ENCODE measurements at regions of chr7 and their contacts with region 1.

Region 1: GRCh38 chr7:129091484-129092002 is 36.6 kb upstream of the TNPO3 start:
- DNase-seq: peak; percentile 91
- H3K4me3 ChIP-seq: peak overlapping the region in 1 of 2 experiments; percentile 14; a peak in 1 of 4 replicates
- H3K27ac ChIP-seq: no peak overlapping the region
- H3K4me1 ChIP-seq: no peaks in the 10 kb centered on the region; a peak in 1 of 4 replicates
- H3K27me3 ChIP-seq: no peaks in the 10 kb centered on the region; the same call in 1 of the 2 replicates
- CTCF ChIP-seq: peak; percentile 100
- EP300 ChIP-seq: no peak
- RAD21 ChIP-seq: peak; percentile 100

Region 2: DNA sequence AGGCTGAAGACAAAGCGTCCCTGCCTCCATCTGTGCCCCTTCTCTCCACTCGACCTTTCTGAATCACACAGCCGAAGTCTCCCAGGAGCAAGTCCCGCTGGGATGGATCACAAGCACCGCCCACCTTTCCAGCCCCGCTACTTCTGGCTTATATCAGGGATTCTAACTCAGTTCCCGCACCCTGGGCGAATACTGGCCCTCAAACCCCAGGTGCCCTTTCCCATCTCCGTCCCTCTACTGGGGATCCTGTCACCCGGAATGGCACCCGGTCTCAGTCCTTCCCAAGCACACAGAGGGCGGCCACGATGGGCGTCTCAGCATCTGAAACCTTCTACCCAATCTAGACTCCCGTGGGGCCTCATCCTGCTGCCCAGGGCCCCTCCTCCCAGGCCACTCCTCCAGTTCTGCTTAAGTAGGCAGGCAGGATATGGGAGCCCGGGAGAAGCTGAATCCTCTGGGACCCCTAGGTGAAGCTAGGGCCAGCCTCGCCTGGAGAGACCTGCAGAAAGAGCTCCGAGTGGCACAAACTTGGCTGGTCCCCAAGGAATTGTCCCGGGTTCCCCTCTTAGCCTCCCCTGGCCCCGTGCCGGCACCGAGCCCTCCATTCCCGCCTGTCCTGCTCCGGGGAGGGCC is 181.8 kb before region 1 on chr7:
- CTCF ChIA-PET with region 1: interaction called, 137 read pairs
- POLR2A ChIA-PET with region 1: no interaction called
- DNase-seq: peak; percentile 70
- H3K4me3 ChIP-seq: no peak overlapping the region
- H3K27ac ChIP-seq: no peak overlapping the region
- H3K4me1 ChIP-seq: peaks cover 0 to 4% of the 10 kb centered on the region in 2 experiments; a peak in 1 of 4 replicates
- H3K27me3 ChIP-seq: peaks cover 12% of the 10 kb centered on the region; the same call in 1 of the 2 replicates
- CTCF ChIP-seq: no peak
- EP300 ChIP-seq: no peak
- RAD21 ChIP-seq: no peak

Region 3: GRCh38 chr7:128954830-128955802 is 136.4 kb before region 1 on chr7:
- CTCF ChIA-PET with region 1: interaction called, 32 read pairs
- POLR2A ChIA-PET with region 1: no interaction called
- DNase-seq: peak; percentile 86
- H3K4me3 ChIP-seq: no peak overlapping the region
- H3K27ac ChIP-seq: peak overlapping the region; percentile 35 to 93
- H3K4me1 ChIP-seq: peaks cover 5 to 52% of the 10 kb centered on the region in 2 experiments; a peak in 3 of 4 replicates
- H3K27me3 ChIP-seq: no peaks in the 10 kb centered on the region
- CTCF ChIP-seq: no peak; the same call in 1 of the 2 replicates
- EP300 ChIP-seq: peak in 1 of 2 experiments; percentile 89; a peak in 2 of 4 replicates
- RAD21 ChIP-seq: peak; percentile 63

Region 4: GRCh38 chr7:129030440-129030839 is 61.1 kb before region 1 on chr7:
- CTCF ChIA-PET with region 1: interaction called, 11 read pairs
- POLR2A ChIA-PET with region 1: no interaction called
- DNase-seq: no peak
- H3K4me3 ChIP-seq: no peak overlapping the region
- H3K27ac ChIP-seq: no peak overlapping the region
- H3K4me1 ChIP-seq: no peaks in the 10 kb centered on the region; a peak in 1 of 4 replicates
- H3K27me3 ChIP-seq: no peaks in the 10 kb centered on the region
- CTCF ChIP-seq: no peak
- EP300 ChIP-seq: no peak
- RAD21 ChIP-seq: no peak

Region 5: DNA sequence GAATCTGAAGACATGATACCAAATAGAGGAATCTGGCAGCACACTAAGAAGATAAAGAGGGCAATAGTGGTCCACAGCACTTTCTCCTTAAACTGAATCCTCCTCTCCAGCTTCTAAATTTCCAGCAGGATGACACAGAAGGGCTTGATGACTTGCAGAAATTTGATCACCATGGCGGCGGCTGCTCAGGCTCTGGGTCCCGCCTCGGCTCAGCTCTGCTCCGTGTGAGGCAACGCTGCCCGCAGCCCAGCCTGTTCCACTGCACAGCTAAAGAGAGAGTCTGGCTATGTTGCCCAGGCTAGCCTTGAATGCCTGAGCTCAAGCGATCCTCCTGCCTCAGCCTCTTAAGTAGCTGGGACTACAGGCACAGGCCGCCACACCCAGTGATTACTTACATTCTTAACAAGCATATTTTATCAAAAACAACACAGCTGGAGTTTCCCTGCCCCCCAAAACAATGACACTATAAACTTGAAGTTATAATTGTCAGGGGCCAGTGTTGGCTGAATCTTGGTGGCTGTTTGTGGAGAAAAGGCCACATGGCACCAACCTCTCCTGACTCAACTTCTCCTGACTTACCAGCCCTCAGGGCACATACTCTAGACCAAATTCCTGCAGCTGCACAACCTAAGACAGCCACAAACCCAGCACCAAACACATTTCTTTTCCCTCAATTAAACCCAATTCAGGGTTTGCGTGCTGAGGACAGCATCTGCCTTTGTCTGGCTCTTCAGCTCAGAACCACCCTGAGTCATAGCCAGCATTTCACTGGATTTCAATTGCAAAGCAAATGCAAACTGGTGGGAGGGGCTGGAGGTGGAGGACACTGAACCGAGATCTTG is 25.0 kb before region 1 on chr7:
- CTCF ChIA-PET with region 1: interaction called, 19 read pairs
- POLR2A ChIA-PET with region 1: no interaction called
- DNase-seq: no peak
- H3K4me3 ChIP-seq: no peak overlapping the region
- H3K27ac ChIP-seq: no peak overlapping the region
- H3K4me1 ChIP-seq: no peaks in the 10 kb centered on the region
- H3K27me3 ChIP-seq: peaks cover 19% of the 10 kb centered on the region; the same call in 1 of the 2 replicates
- CTCF ChIP-seq: no peak
- EP300 ChIP-seq: no peak
- RAD21 ChIP-seq: no peak

Region 6: DNA sequence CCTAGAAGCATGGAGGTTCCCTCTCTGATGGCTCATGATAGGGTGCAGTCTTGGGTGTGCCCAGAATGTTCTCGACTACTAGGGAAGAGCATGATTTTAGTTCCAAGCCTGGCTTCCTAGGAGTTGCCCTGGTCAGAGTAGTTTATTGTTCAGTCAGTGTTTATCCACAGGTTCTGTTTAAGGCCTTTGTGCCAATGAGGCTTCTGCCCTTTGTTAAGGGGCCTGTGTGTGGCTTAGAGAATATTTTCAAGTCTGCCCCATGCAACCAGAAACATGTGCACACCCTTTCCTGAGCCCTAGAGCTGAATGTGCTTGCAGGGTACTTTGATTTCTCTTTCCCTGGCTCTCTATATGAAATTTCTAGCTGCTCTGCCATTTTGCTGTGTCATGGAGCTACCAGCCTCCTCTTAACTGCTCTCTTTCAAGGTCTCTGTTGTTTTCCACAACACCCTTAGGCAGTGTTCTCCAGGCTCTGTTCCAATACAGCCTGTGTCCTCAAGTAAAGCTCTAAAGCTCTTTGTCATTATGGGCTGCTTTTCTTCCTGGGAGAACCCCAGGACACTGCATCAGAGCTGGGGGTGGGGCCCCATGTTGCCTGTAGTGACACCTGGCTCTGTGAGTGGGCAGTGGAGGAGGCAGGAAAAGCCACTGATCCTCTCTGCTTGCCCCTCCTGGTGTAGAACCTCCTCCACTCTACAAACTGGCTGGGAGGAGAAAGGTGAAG is 18.9 kb after region 1 on chr7:
- CTCF ChIA-PET with region 1: interaction called, 33 read pairs
- POLR2A ChIA-PET with region 1: no interaction called
- DNase-seq: peak; percentile 32
- H3K4me3 ChIP-seq: no peak overlapping the region
- H3K27ac ChIP-seq: no peak overlapping the region
- H3K4me1 ChIP-seq: peaks cover 0 to 7% of the 10 kb centered on the region in 2 experiments; a peak in 1 of 4 replicates
- H3K27me3 ChIP-seq: peaks cover 12% of the 10 kb centered on the region; the same call in 1 of the 2 replicates
- CTCF ChIP-seq: no peak
- EP300 ChIP-seq: no peak
- RAD21 ChIP-seq: no peak

Region 7: DNA sequence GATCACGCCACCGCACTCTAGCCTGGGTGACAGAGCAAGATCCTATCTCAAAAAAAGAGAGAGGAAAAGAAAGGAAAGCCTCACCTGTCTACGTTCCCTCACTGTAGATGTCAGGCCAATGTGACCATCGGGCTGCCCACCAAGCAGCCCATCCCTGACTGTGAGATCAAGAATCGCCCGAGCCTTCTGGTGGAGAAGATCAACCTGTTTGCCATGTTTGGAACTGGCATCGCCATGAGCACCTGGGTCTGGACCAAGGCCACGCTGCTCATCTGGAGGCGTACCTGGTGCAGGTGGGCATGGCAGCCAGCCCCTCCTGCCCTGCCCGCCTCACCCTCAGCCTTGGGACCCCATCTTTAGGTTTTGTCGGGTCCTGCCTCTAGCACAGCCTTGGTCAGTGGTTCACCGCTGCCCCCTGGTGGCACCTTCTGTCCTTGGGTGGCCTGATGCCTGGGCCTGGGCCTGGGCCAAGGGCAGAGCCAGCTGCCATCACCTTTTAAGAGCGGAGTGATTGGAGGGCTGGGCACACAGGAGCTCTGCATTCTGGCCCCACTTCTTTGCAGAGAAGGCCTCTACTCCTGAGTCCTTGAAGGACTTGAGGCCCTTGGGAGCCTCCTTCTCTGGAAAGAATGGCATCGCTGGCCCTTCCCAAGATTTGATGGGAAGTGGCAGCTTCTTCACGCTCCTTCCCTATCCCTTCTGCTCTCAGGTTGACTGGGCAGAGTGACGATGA is 118.9 kb after region 1 on chr7:
- CTCF ChIA-PET with region 1: interaction called, 20 read pairs
- POLR2A ChIA-PET with region 1: no interaction called
- DNase-seq: peak; percentile 94
- H3K4me3 ChIP-seq: no peak overlapping the region; a peak in 1 of 4 replicates
- H3K27ac ChIP-seq: no peak overlapping the region
- H3K4me1 ChIP-seq: peaks cover 0 to 6% of the 10 kb centered on the region in 2 experiments; a peak in 1 of 4 replicates
- H3K27me3 ChIP-seq: no peaks in the 10 kb centered on the region
- CTCF ChIP-seq: peak; percentile 96
- EP300 ChIP-seq: no peak
- RAD21 ChIP-seq: peak; percentile 89